ENCODE measurements at regions of chr1 and their contacts with region 1.

Region 1: DNA sequence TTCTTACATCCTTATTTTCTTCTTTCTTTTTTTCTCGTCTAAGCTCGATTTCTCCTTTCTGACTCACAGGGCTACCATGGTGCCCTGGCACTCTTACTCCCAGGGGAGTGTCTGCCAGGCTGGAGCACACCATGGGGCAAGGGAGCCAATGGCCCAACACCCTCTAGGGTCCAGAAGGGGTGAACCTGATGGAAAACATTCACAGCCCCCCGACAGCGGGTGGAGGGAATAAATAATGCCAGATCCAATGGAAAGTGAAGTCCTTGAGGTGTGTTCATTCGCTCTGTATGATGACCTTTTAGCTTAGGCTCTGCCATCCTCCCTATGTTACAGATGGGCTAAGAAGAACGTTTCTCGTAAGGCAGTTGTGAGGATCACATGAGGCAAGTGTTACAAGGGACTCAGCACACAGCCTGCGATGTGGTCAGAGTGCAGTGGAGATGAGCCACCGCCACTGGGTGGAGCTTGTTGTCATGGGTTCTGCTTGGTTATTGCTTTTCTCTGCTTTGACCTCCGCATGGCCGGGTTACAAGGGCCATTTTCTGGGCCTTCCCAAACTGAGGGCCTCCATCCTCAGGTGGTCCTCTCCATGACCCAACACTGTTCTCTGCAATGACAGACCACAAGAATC is 3.5 kb upstream of the FCMR start:
- DNase-seq: peak in 3 of 9 donors; percentile 25 to 38 (median 37)
- ATAC-seq: peak; percentile 62
- H3K4me3 ChIP-seq: no peak overlapping the region
- H3K4me3 Mint-ChIP-seq: no peak overlapping the region
- H3K27ac ChIP-seq: peak overlapping the region; percentile 90
- H3K27ac Mint-ChIP-seq: no peak overlapping the region
- H3K4me1 ChIP-seq: peaks cover 46 to 51% of the 10 kb centered on the region in 2 donors
- H3K4me1 Mint-ChIP-seq: peaks cover 19 to 37% (median 31%) of the 10 kb centered on the region in 7 donors
- H3K27me3 ChIP-seq: no peaks in the 10 kb centered on the region
- H3K27me3 Mint-ChIP-seq: no peaks in the 10 kb centered on the region

Region 2: DNA sequence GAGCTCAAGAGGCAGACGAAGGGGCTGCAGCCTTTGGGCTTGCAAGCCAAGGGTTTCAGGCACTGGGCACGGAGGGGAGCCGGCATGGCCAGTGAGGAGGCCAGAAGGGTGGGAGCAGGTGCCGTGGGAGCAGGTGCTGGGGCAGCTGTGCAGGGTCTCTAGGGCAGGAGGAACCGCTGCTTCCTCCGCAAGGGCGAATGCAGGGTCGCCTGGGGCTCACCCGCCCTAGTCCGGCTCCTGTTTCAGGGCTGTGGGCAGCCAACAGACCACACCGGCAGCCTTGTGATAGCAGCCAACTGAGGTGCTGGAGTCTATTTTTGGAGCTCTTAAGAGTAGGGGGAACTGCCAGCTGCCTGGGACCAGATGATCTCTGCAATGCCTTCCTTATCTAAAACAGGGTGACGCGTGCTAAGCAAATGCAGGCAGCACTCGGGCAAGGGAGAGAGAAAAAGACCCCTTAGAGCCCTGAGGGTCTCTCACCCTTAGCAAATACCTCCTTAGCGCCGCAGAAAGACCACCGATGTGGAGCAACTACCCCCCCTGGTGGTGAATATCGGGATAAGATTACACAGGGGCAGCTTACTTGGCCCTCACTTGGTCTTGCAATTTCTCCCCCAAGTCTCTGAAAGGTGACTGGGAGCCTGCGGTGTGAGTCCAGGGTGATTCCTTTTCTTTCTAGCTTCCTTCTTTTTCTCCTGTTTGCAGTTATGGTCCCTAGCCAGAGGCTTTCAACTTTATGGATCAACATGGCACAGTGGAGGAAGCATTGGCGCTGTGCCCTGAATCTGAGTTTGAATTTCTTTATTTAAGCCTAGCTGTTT is 261.2 kb before region 1 on chr1:
- CTCF ChIA-PET with region 1: interaction called, 10 read pairs
- POLR2A ChIA-PET with region 1: no interaction called
- intact Hi-C with region 1: no loop called
- DNase-seq: peak; percentile 44 to 83 (median 68)
- ATAC-seq: peak; percentile 87
- H3K4me3 ChIP-seq: no peak overlapping the region
- H3K4me3 Mint-ChIP-seq: peak overlapping the region in 4 of 10 donors; percentile 19 to 63 (median 41)
- H3K27ac ChIP-seq: no peak overlapping the region
- H3K27ac Mint-ChIP-seq: peak overlapping the region in 1 of 9 donors; percentile 15
- H3K4me1 ChIP-seq: peaks cover 0 to 9% of the 10 kb centered on the region in 2 donors
- H3K4me1 Mint-ChIP-seq: peaks cover 3 to 35% (median 9%) of the 10 kb centered on the region in 7 donors
- H3K27me3 ChIP-seq: peaks cover 0 to 6% of the 10 kb centered on the region in 2 donors
- H3K27me3 Mint-ChIP-seq: peaks cover 8 to 31% (median 21%) of the 10 kb centered on the region in 5 donors

Region 3: GRCh38 chr1:206808615-206809014 is 116.6 kb before region 1 on chr1:
- CTCF ChIA-PET with region 1: interaction called, 20 read pairs
- POLR2A ChIA-PET with region 1: interaction called, 22 read pairs
- intact Hi-C with region 1: loop called in 1 of 2 experiments (anchors 5 kb)
- DNase-seq: peak in 7 of 9 donors; percentile 47 to 71 (median 58)
- ATAC-seq: peak; percentile 90
- H3K4me3 ChIP-seq: no peak overlapping the region
- H3K4me3 Mint-ChIP-seq: peak overlapping the region in 1 of 10 donors; percentile 8
- H3K27ac ChIP-seq: no peak overlapping the region
- H3K27ac Mint-ChIP-seq: peak overlapping the region in 8 of 9 donors; percentile 17 to 76 (median 51)
- H3K4me1 ChIP-seq: peaks cover 30 to 42% of the 10 kb centered on the region in 2 donors
- H3K4me1 Mint-ChIP-seq: peaks cover 24 to 61% (median 52%) of the 10 kb centered on the region in 7 donors
- H3K27me3 ChIP-seq: no peaks in the 10 kb centered on the region
- H3K27me3 Mint-ChIP-seq: peaks cover 0 to 12% (median 0%) of the 10 kb centered on the region in 5 donors

Region 4: GRCh38 chr1:206905280-206906164 is 19.7 kb before region 1 on chr1:
- CTCF ChIA-PET with region 1: interaction called, 56 read pairs
- POLR2A ChIA-PET with region 1: interaction called, 600 read pairs
- intact Hi-C with region 1: loop called in 1 of 2 experiments (anchors 2 kb)
- DNase-seq: peak in 7 of 9 donors; percentile 38 to 64 (median 59)
- ATAC-seq: peak; percentile 32
- H3K4me3 ChIP-seq: peak overlapping the region; percentile 17
- H3K4me3 Mint-ChIP-seq: peak overlapping the region; percentile 60 to 88 (median 78)
- H3K27ac ChIP-seq: peak overlapping the region; percentile 69
- H3K27ac Mint-ChIP-seq: peak overlapping the region; percentile 79 to 98 (median 93)
- H3K4me1 ChIP-seq: peaks cover 28 to 72% of the 10 kb centered on the region in 2 donors
- H3K4me1 Mint-ChIP-seq: peaks cover 52 to 94% (median 86%) of the 10 kb centered on the region in 7 donors
- H3K27me3 ChIP-seq: no peaks in the 10 kb centered on the region
- H3K27me3 Mint-ChIP-seq: peaks cover 0 to 6% (median 0%) of the 10 kb centered on the region in 5 donors

Region 5: GRCh38 chr1:206971029-206971655 is 45.9 kb after region 1 on chr1:
- CTCF ChIA-PET with region 1: no interaction called
- POLR2A ChIA-PET with region 1: interaction called, 13 read pairs
- intact Hi-C with region 1: loop called in 1 of 2 experiments (anchors 5 kb)
- DNase-seq: no peak
- ATAC-seq: peak; percentile 58
- H3K4me3 ChIP-seq: no peak overlapping the region
- H3K4me3 Mint-ChIP-seq: no peak overlapping the region
- H3K27ac ChIP-seq: no peak overlapping the region
- H3K27ac Mint-ChIP-seq: peak overlapping the region in 1 of 9 donors; percentile 37
- H3K4me1 ChIP-seq: peaks cover 0 to 18% of the 10 kb centered on the region in 2 donors
- H3K4me1 Mint-ChIP-seq: peaks cover 20 to 34% (median 22%) of the 10 kb centered on the region in 7 donors
- H3K27me3 ChIP-seq: no peaks in the 10 kb centered on the region
- H3K27me3 Mint-ChIP-seq: peaks cover 0 to 41% (median 0%) of the 10 kb centered on the region in 5 donors

Region 6: DNA sequence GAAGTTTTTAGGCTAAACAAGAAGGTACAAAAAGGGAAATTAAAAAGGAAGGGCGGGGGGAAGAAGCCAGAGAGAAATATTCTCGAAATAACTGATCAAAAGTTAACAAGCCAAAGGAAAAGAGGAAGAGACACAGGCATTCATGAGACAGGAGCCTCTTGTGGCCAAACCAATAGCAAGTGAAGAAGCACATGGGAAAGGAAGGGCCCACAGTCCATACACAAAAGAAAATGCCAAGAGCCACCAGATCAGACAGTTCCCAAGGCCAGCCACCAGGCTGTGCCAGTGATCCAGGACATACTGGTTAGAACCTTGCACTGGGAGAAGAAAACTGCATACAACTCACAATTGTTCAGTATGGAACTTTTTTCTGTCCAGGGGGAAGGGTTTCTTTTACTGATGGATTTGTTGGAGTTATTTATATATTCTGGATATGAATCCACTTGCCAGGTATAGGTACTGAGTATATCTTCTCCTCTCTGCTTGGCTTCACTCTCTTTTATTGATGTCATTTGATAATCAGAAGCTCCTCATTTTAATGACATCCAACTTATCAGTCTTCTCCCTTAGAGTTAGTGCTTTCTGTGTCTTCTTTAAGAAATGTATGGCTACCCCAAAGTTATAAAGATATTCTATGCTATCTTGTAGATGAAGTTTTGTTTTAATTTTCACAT is 903.4 kb after region 1 on chr1:
- CTCF ChIA-PET with region 1: no interaction called
- POLR2A ChIA-PET with region 1: no interaction called
- intact Hi-C with region 1: loop called in 1 of 2 experiments (anchors 10 kb)
- DNase-seq: peak; percentile 39 to 69 (median 57)
- ATAC-seq: peak; percentile 40
- H3K4me3 ChIP-seq: no peak overlapping the region
- H3K4me3 Mint-ChIP-seq: peak overlapping the region in 3 of 10 donors; percentile 1 to 21 (median 9)
- H3K27ac ChIP-seq: peak overlapping the region; percentile 26
- H3K27ac Mint-ChIP-seq: peak overlapping the region; percentile 43 to 100 (median 96)
- H3K4me1 ChIP-seq: peaks cover 36 to 75% of the 10 kb centered on the region in 2 donors
- H3K4me1 Mint-ChIP-seq: peaks cover 82 to 99% (median 97%) of the 10 kb centered on the region in 7 donors
- H3K27me3 ChIP-seq: no peaks in the 10 kb centered on the region
- H3K27me3 Mint-ChIP-seq: peaks cover 0 to 5% (median 0%) of the 10 kb centered on the region in 5 donors

Measured in naive thymus-derived CD4-positive, alpha-beta T cell (primary cell).